CD4-positive, alpha-beta T cell (primary cell): ENCODE measurements at regions of chr6 and their contacts with region 1.

Region 1: DNA sequence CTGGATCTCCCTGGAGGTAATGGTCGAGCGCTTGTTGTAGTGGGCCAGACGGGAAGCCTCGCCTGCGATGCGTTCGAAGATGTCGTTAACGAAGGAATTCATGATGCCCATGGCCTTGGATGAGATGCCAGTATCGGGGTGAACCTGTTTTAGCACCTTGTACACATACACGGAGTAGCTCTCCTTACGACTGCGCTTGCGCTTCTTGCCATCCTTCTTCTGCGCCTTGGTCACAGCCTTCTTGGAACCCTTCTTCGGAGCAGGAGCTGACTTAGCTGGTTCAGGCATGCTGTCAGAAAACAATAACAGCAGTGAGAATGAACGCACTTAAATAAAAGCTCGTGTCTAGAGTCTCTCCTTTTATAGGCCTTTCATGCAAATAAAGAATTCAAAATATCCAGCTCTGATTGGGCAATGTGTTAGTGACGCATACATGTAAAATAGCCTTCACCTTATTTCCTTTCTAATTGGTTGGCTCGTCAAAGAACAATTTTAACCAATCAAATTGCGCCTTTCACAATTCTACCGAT is 129.2 kb downstream of the HFE start:
- DNase-seq: peak; percentile 52 to 98 (median 71)
- ATAC-seq: peak; percentile 80
- H3K4me3 ChIP-seq: peak overlapping the region; percentile 76
- H3K4me3 Mint-ChIP-seq: no peak overlapping the region
- H3K27ac ChIP-seq: peak overlapping the region; percentile 87 to 88
- H3K27ac Mint-ChIP-seq: no peak overlapping the region
- H3K4me1 ChIP-seq: peaks cover 33% of the 10 kb centered on the region
- H3K4me1 Mint-ChIP-seq: no peaks in the 10 kb centered on the region
- H3K27me3 ChIP-seq: no peaks in the 10 kb centered on the region
- H3K27me3 Mint-ChIP-seq: no peaks in the 10 kb centered on the region
- CTCF ChIP-seq: no peak

Region 2: DNA sequence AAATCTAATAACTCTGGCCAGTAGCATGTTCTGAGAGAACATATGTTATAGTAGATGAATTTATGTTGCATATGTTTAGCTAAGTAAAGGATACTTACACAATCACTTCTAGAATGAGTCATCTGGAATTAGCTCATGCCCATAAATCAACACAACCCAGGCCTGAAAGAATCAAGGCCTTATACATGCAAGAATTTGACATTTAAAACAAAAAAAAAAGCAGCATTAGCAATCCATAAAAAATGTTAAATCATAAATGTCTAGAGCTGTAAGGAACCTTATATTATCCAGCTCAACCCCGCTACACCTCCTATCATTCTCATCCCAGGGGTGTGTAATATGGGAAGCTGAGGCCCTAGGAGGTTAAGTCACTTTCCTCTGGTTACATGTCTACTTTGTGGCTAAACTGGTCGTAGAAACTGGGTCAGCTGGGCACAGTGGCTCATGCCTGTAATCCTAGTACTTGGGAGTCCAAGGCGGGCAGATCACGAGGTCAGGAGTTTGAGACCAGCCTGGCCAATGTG is 1042.4 kb before region 1 on chr6:
- CTCF ChIA-PET with region 1: no interaction called
- POLR2A ChIA-PET with region 1: no interaction called
- intact Hi-C with region 1: no loop called
- DNase-seq: peak in 2 of 14 experiments; percentile 27 to 33
- ATAC-seq: no peak
- H3K4me3 ChIP-seq: no peak overlapping the region
- H3K4me3 Mint-ChIP-seq: no peak overlapping the region
- H3K27ac ChIP-seq: no peak overlapping the region
- H3K27ac Mint-ChIP-seq: no peak overlapping the region
- H3K4me1 ChIP-seq: no peaks in the 10 kb centered on the region
- H3K4me1 Mint-ChIP-seq: no peaks in the 10 kb centered on the region
- H3K27me3 ChIP-seq: no peaks in the 10 kb centered on the region
- H3K27me3 Mint-ChIP-seq: no peaks in the 10 kb centered on the region
- CTCF ChIP-seq: no peak

Region 3: DNA sequence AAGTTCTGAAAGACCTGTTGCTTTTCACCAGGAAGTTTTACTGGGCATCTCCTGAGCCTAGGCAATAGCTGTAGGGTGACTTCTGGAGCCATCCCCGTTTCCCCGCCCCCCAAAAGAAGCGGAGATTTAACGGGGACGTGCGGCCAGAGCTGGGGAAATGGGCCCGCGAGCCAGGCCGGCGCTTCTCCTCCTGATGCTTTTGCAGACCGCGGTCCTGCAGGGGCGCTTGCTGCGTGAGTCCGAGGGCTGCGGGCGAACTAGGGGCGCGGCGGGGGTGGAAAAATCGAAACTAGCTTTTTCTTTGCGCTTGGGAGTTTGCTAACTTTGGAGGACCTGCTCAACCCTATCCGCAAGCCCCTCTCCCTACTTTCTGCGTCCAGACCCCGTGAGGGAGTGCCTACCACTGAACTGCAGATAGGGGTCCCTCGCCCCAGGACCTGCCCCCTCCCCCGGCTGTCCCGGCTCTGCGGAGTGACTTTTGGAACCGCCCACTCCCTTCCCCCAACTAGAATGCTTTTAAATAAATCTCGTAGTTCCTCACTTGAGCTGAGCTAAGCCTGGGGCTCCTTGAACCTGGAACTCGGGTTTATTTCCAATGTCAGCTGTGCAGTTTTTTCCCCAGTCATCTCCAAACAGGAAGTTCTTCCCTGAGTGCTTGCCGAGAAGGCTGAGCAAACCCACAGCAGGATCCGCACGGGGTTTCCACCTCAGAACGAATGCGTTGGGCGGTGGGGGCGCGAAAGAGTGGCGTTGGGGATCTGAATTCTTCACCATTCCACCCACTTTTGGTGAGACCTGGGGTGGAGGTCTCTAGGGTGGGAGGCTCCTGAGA is 128.9 kb before region 1 on chr6 and contains the start of gene HFE:
- CTCF ChIA-PET with region 1: no interaction called
- POLR2A ChIA-PET with region 1: interaction called, 16 read pairs
- intact Hi-C with region 1: no loop called
- DNase-seq: peak in 11 of 14 experiments; percentile 3 to 57 (median 21)
- ATAC-seq: peak; percentile 25
- H3K4me3 ChIP-seq: peak within 1 kb of the TSS; percentile 86
- H3K4me3 Mint-ChIP-seq: peak within 1 kb of the TSS; percentile 87
- H3K27ac ChIP-seq: peak within 1 kb of the TSS; percentile 23 to 61
- H3K27ac Mint-ChIP-seq: peak within 1 kb of the TSS; percentile 71
- H3K4me1 ChIP-seq: peaks cover 33% of the 10 kb centered on the region
- H3K4me1 Mint-ChIP-seq: peaks cover 34% of the 10 kb centered on the region
- H3K27me3 ChIP-seq: no peaks in the 10 kb centered on the region
- H3K27me3 Mint-ChIP-seq: no peaks in the 10 kb centered on the region
- CTCF ChIP-seq: no peak
- total RNA-seq, gene HFE: 0.08 to 0.28 TPM

Region 4: DNA sequence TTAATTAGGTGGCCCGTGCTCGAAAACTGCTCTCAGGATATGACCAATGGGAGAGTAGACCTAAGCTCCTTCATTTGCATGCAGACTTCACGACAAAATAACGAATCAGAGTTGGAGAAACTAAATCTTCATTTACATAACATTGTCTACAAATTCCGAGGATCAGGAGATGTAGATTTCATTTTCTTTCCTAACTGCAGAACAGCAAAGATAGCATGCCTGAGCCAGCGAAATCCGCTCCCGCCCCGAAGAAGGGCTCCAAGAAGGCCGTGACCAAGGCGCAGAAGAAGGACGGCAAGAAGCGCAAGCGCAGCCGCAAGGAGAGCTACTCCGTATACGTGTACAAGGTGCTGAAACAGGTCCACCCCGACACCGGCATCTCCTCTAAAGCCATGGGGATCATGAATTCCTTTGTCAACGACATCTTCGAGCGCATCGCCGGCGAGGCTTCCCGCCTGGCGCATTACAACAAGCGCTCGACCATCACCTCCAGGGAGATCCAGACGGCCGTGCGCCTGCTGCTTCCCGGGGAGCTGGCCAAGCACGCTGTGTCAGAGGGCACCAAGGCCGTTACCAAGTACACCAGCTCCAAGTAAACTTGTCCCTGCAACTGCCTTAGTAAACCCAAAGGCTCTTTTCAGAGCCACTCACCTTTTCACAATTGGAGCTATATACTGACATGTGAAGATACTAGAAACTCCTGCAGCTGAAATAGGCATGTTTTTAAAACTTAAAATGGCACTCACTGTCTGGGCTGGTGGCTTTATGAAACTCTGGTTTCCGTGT is 32.6 kb before region 1 on chr6:
- CTCF ChIA-PET with region 1: interaction called, 27 read pairs
- POLR2A ChIA-PET with region 1: interaction called, 1,838 read pairs
- intact Hi-C with region 1: loop called in 1 of 2 experiments (anchors 2 kb)
- DNase-seq: peak in 13 of 14 experiments; percentile 20 to 94 (median 48)
- ATAC-seq: peak; percentile 89
- H3K4me3 ChIP-seq: peak overlapping the region; percentile 62
- H3K4me3 Mint-ChIP-seq: peak overlapping the region; percentile 99
- H3K27ac ChIP-seq: peak overlapping the region; percentile 43 to 72
- H3K27ac Mint-ChIP-seq: peak overlapping the region; percentile 86
- H3K4me1 ChIP-seq: peaks cover 34% of the 10 kb centered on the region
- H3K4me1 Mint-ChIP-seq: peaks cover 42% of the 10 kb centered on the region
- H3K27me3 ChIP-seq: no peaks in the 10 kb centered on the region
- H3K27me3 Mint-ChIP-seq: no peaks in the 10 kb centered on the region
- CTCF ChIP-seq: no peak

Region 5: GRCh38 chr6:26258200-26258977 is 42.0 kb after region 1 on chr6:
- CTCF ChIA-PET with region 1: no interaction called
- POLR2A ChIA-PET with region 1: interaction called, 12 read pairs
- intact Hi-C with region 1: no loop called
- DNase-seq: no peak
- ATAC-seq: no peak
- H3K4me3 ChIP-seq: no peak overlapping the region
- H3K4me3 Mint-ChIP-seq: no peak overlapping the region
- H3K27ac ChIP-seq: no peak overlapping the region
- H3K27ac Mint-ChIP-seq: no peak overlapping the region
- H3K4me1 ChIP-seq: peaks cover 3% of the 10 kb centered on the region
- H3K4me1 Mint-ChIP-seq: peaks cover 6% of the 10 kb centered on the region
- H3K27me3 ChIP-seq: no peaks in the 10 kb centered on the region
- H3K27me3 Mint-ChIP-seq: no peaks in the 10 kb centered on the region
- CTCF ChIP-seq: no peak

Region 6: GRCh38 chr6:26457806-26458688 is 241.6 kb after region 1 on chr6 and contains the start of gene BTN2A1:
- CTCF ChIA-PET with region 1: no interaction called
- POLR2A ChIA-PET with region 1: no interaction called
- intact Hi-C with region 1: loop called in 1 of 2 experiments (anchors 1 kb)
- DNase-seq: peak; percentile 30 to 91 (median 52)
- ATAC-seq: peak; percentile 97
- H3K4me3 ChIP-seq: peak within 1 kb of the TSS; percentile 91
- H3K4me3 Mint-ChIP-seq: peak within 1 kb of the TSS; percentile 98
- H3K27ac ChIP-seq: peak within 1 kb of the TSS; percentile 73 to 91
- H3K27ac Mint-ChIP-seq: peak within 1 kb of the TSS; percentile 92
- H3K4me1 ChIP-seq: peaks cover 44% of the 10 kb centered on the region
- H3K4me1 Mint-ChIP-seq: peaks cover 64% of the 10 kb centered on the region
- H3K27me3 ChIP-seq: no peaks in the 10 kb centered on the region
- H3K27me3 Mint-ChIP-seq: no peaks in the 10 kb centered on the region
- CTCF ChIP-seq: no peak
- total RNA-seq, gene BTN2A1: 16.2 to 17.5 TPM

Region 7: DNA sequence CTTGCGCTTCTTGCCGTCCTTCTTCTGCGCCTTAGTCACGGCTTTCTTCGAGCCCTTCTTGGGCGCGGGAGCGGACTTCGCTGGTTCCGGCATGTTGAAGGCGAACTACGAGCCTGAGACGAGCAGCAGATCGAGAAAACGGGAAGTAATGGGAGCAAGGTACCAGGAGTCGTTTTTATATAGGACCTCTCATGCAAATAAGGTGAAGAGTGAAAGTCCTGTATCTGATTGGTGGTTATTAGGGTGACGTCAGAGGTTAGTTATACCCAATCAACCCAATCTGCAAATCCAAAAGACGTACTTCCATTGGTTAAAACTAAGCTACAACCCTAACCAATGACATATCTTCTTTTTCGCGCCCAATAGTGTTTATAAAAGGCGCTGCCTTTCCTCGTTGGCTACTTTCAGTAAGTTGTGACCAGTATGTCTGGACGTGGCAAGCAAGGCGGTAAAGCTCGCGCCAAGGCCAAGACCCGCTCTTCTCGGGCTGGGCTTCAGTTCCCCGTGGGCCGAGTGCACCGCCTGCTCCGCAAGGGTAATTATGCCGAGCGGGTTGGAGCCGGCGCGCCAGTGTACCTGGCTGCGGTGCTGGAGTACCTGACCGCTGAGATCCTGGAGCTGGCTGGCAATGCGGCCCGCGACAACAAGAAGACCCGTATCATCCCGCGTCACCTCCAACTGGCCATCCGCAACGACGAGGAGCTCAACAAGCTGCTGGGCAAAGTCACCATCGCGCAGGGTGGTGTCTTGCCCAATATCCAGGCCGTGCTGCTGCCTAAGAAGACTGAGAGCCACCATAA is 930.5 kb after region 1 on chr6:
- CTCF ChIA-PET with region 1: no interaction called
- POLR2A ChIA-PET with region 1: interaction called, 39 read pairs
- intact Hi-C with region 1: no loop called
- DNase-seq: peak; percentile 61 to 99 (median 72)
- ATAC-seq: peak; percentile 86
- H3K4me3 ChIP-seq: peak overlapping the region; percentile 69
- H3K4me3 Mint-ChIP-seq: no peak overlapping the region
- H3K27ac ChIP-seq: peak overlapping the region; percentile 84 to 97
- H3K27ac Mint-ChIP-seq: no peak overlapping the region
- H3K4me1 ChIP-seq: peaks cover 17% of the 10 kb centered on the region
- H3K4me1 Mint-ChIP-seq: peaks cover 11% of the 10 kb centered on the region
- H3K27me3 ChIP-seq: no peaks in the 10 kb centered on the region
- H3K27me3 Mint-ChIP-seq: no peaks in the 10 kb centered on the region
- CTCF ChIP-seq: no peak

Region 8: DNA sequence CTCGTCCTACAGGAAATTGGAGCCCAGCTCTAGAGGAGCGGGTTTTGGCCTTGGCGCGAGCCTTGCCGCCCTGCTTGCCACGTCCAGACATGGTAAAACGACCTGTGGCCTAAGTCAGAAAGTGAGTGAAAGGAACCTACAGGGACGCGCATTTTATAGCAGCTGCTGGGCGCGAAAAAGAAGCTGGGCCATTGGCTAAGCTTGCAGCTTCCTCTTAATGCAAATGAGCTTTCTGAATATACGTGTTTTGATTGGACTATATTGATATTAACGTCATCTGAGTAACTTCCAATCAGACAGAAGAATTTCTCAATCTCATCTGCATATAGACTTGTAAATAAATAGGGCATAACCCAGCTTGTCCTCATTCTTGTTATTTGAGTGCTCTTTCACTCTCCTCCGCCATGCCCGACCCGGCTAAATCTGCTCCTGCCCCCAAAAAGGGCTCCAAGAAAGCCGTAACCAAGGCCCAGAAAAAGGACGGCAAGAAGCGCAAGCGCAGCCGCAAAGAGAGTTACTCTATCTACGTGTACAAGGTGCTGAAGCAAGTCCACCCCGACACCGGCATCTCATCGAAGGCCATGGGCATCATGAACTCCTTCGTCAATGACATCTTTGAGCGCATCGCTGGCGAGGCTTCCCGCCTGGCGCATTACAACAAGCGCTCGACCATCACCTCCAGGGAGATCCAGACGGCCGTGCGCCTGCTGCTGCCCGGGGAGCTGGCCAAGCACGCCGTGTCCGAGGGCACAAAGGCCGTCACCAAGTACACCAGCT is 1676.8 kb after region 1 on chr6:
- CTCF ChIA-PET with region 1: no interaction called
- POLR2A ChIA-PET with region 1: interaction called, 22 read pairs
- intact Hi-C with region 1: no loop called
- DNase-seq: peak; percentile 76 to 98 (median 85)
- ATAC-seq: peak; percentile 73
- H3K4me3 ChIP-seq: peak overlapping the region; percentile 74
- H3K4me3 Mint-ChIP-seq: no peak overlapping the region
- H3K27ac ChIP-seq: peak overlapping the region; percentile 84 to 86
- H3K27ac Mint-ChIP-seq: no peak overlapping the region
- H3K4me1 ChIP-seq: peaks cover 49% of the 10 kb centered on the region
- H3K4me1 Mint-ChIP-seq: peaks cover 29% of the 10 kb centered on the region
- H3K27me3 ChIP-seq: no peaks in the 10 kb centered on the region
- H3K27me3 Mint-ChIP-seq: no peaks in the 10 kb centered on the region
- CTCF ChIP-seq: no peak